ENCODE measurements at regions of chr7 and their contacts with region 1.

Region 1: DNA sequence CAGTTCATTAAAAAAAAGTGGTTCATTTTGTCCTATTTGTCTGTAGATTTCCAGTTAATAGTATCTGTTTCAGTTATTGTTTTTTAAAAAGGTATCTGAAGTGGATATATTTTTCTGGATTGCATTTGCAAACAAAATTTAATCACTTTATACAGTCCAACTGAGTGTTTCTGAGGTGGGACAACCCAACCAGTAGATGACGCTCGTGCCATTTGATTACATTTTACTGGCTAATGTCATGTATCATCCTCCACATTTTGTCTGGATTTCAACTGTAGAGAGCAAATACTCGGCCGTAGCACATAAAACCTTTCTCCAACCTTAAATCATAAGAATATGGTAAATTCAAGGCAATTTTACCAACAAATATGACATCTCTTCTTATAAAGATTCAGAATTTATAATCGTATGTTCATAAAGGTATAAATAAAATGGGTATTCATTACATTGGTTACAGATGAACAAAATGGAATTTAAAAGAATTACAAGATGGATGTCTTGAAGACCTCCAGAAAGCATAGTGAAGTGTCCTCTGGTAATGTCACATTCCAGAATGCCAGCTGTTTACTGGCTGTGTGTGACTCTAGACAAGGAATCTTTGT is 789.0 kb downstream of the PHTF2 start:
- DNase-seq: no peak
- ATAC-seq: no peak
- H3K4me3 ChIP-seq: no peak overlapping the region
- H3K27ac ChIP-seq: no peak overlapping the region
- H3K4me1 ChIP-seq: no peaks in the 10 kb centered on the region
- H3K27me3 ChIP-seq: no peaks in the 10 kb centered on the region
- CTCF ChIP-seq: peak in 5 of 12 donors; percentile 15 to 24 (median 22)
- POLR2A ChIP-seq: no peak

Region 2: DNA sequence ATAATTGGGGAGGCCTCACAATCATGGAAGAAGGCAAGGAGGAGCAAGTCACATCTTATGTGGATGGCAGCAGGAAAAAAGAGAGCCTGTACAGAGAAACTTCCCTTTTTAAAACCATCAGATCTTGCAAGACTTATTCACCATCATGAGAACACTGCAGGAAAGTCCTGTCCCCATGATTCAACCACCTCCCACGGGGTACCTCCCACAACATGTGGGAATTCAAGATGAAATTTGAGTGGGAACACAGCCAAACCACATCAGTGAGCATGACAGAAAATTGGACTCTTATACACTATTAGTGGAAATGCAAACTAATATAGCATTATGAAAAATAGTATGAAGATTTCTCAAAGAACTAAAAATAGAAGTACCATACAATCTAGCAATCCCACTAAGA is 594.7 kb after region 1 on chr7:
- intact Hi-C with region 1: loop called in 1 of 10 experiments (anchors 10 kb)
- DNase-seq: no peak
- ATAC-seq: no peak
- H3K4me3 ChIP-seq: no peak overlapping the region
- H3K27ac ChIP-seq: no peak overlapping the region
- H3K4me1 ChIP-seq: no peaks in the 10 kb centered on the region
- H3K27me3 ChIP-seq: no peaks in the 10 kb centered on the region
- CTCF ChIP-seq: no peak
- POLR2A ChIP-seq: no peak

Measured in heart left ventricle (tissue), 16 donors.